ENCODE measurements at regions of chr18 and their contacts with region 1.

Region 1: DNA sequence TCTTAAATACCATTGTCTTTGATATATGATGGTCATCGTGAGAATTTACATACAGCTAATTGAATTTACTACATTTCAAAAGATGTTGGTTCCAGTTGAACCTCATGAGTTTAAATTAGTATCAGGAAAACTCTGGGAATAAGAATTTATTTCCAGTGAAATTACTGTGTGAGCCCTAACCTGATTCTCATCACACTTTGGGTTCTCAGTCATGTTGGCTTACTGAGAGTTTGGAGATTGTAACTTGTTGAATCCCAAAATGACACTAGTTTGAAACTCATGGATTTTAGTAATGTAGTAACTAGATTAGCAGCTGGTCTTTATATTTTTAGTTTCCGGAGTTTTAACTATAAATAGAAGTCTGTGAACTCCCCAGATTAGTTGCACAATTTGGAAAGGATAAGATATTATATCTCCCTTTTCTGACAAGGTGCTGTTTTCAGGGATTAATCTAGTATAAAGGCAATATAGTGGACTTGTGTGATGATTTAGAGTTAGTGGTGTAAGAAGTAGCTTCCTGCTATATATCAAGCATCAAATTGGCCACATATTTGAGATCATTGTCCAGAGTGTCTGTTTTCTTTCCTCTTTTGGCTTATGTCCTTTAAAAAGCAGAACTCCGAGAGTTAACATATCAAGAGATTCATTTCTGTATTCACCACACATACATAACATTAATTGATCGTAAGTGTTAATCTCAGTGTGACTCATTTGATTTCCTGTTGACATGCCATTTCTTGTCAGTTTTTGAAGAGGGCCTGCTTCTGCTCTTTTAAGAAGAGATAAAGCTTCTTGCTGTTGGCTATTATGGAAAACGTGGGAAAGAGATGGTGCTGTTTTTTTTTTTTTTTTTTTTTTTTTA is 15.7 kb downstream of the NDUFV2 start:
- DNase-seq: peak; percentile 59
- ATAC-seq: peak; percentile 26
- H3K4me3 ChIP-seq: peak overlapping the region in 2 of 5 experiments; percentile 3 to 66
- H3K4me3 Mint-ChIP-seq: peak overlapping the region; percentile 88
- H3K27ac ChIP-seq: peak overlapping the region; percentile 82 to 99
- H3K27ac Mint-ChIP-seq: peak overlapping the region; percentile 98
- H3K4me1 ChIP-seq: peaks cover 56 to 86% of the 10 kb centered on the region in 2 donors
- H3K4me1 Mint-ChIP-seq: peaks cover 70% of the 10 kb centered on the region
- H3K27me3 ChIP-seq: no peaks in the 10 kb centered on the region
- H3K27me3 Mint-ChIP-seq: no peaks in the 10 kb centered on the region
- CTCF ChIP-seq: no peak

Region 2: DNA sequence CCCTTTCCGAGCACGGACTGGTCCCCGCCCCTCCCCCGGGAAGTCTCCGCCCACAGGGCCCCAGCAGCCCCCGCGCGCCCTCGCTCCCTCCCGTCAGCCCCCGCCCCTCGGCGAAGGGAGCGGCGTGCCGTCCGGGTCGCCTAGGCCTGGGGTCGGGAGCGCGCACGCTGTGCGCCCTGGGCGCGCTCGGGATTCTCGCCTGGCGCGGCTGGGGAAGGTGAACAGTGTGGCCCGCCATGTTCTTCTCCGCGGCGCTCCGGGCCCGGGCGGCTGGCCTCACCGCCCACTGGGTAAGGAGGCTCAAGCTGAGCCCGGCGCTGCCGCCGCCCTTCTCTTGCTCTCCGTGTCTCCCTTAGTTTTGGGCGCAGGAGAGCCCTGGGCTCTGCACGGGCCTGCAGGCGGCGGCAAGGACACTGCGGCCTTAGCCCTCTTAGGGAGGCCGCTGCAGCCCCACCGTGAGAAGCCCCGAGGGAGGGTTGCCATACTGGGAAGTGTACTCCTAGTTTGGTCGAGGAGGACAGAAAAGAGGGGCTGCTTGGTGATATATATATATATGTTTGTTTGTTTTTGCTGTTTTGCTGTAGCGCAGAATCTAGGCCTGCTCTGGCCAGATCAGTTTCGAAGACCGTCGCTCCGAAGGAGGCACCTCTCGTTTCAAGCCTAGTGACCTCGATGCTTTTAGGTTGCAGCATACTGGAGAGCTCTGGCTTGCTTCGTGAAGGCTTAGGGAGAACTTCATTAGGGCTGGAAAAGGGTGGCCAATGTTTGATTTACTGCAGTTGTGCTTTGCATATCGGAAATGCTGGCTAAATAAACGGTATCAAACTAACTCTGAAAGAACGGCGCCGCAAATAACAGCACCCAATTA is 15.5 kb before region 1 on chr18 and contains the start of gene NDUFV2:
- CTCF ChIA-PET with region 1: interaction called, 27 read pairs
- POLR2A ChIA-PET with region 1: interaction called, 14 read pairs
- intact Hi-C with region 1: loop called (anchors 1 kb)
- DNase-seq: peak; percentile 96
- ATAC-seq: peak; percentile 96
- H3K4me3 ChIP-seq: peak within 1 kb of the TSS; percentile 77 to 98 (median 88)
- H3K4me3 Mint-ChIP-seq: peak within 1 kb of the TSS; percentile 95
- H3K27ac ChIP-seq: peak within 1 kb of the TSS; percentile 80 to 86
- H3K27ac Mint-ChIP-seq: peak within 1 kb of the TSS; percentile 93
- H3K4me1 ChIP-seq: peaks cover 43 to 50% of the 10 kb centered on the region in 2 donors
- H3K4me1 Mint-ChIP-seq: peaks cover 54% of the 10 kb centered on the region
- H3K27me3 ChIP-seq: no peaks in the 10 kb centered on the region
- H3K27me3 Mint-ChIP-seq: no peaks in the 10 kb centered on the region
- CTCF ChIP-seq: no peak
- total RNA-seq, gene NDUFV2: 135 and 137 TPM in 2 replicates

Measured in B cell (primary cell).